Left ventricle myocardium inferior (tissue), 1 donor: ENCODE measurements at regions of chr7 and their contacts with region 1.

Region 1: DNA sequence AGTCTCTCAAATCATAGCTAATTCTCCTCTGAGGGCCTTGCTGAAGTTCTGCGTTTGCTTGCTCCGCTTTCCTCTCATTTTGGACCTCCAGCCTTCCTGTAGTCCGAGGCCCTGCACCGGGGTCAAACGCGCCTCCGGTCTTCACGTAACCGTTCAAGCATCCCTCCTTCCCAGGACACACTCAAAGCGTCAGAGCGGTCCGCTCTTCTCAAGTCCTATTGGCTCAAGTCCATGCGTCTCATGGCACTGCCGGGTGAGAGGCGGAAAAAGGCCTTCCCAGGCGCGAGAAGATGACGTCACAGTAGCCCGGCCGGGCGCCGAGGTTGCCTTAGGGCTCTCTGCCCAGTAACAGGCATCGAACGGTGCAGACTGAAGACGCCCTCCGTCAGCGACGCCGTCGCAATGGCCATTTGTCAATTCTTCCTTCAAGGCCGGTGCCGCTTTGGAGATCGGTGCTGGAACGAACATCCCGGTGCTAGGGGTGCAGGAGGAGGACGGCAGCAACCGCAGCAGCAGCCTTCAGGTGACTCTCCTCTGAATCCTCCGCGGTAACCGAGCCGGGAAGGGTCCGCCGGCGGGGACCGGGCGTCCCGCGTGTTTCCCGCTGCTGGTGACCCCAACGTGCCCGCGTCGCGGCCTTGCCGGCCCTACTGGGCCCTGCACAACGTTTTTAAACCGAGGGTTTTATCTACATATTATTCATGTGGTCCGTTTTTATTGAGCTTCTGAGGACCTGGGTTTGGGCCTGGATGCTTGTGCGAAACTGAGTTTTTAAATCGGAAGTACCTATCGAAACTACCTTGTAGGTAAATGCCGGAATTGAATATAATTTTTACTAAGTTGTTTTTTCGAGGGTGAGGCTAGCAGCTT is at the start of gene NUP42:
- DNase-seq: peak; percentile 93
- H3K4me3 ChIP-seq: peak within 1 kb of the TSS; percentile 94
- H3K27ac ChIP-seq: peak within 1 kb of the TSS; percentile 96
- H3K4me1 ChIP-seq: peaks cover 58% of the 10 kb centered on the region
- H3K27me3 ChIP-seq: no peaks in the 10 kb centered on the region
- CTCF ChIP-seq: no peak
- total RNA-seq, gene NUP42: 20.3 TPM

Region 2: DNA sequence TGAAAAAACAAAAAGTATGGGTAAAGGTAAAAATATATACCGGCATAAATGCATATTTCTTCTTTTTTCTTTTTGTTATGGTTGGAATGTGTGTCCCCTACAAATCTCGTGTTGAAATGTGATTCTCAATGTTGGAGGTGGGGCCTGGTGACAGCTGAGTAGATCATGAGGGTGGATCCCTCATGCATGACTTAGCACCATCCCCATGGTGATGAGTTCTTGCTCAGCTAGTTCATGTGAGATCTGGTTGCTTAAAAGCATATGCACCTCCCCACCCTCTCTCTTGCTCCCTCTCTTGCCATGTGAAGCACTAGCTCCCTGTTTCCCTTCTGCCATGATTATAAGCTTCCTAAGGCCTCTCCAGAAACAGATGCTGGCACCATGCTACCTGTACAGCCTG is 261.2 kb before region 1 on chr7:
- intact Hi-C with region 1: no loop called
- DNase-seq: no peak
- H3K4me3 ChIP-seq: no peak overlapping the region
- H3K27ac ChIP-seq: no peak overlapping the region
- H3K4me1 ChIP-seq: no peaks in the 10 kb centered on the region
- H3K27me3 ChIP-seq: no peaks in the 10 kb centered on the region
- CTCF ChIP-seq: no peak

Region 3: DNA sequence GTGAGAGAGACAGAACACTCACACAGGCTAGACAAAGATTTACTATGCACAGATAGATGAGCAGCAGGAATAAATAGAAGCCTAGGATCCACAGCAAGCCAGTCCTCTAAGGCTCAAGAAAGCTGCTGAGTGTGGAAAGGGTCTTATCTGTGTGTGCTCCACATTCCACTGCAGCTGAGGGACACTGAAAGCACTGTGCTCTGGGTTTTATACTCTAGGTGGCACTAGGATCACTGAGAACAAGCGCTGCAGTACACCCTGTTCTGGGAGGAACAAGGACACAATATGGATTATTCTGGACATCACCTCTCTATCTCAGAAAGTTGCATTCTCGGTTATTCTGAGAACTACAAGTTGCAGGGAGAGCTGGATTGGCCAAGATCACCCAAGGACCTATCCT is 81.2 kb before region 1 on chr7:
- intact Hi-C with region 1: loop called (anchors 5 kb)
- DNase-seq: no peak
- H3K4me3 ChIP-seq: no peak overlapping the region
- H3K27ac ChIP-seq: peak overlapping the region; percentile 57
- H3K4me1 ChIP-seq: peaks cover 21% of the 10 kb centered on the region
- H3K27me3 ChIP-seq: no peaks in the 10 kb centered on the region
- CTCF ChIP-seq: peak; percentile 54

Region 4: GRCh38 chr7:23261843-23262452 is 80.0 kb after region 1 on chr7:
- intact Hi-C with region 1: loop called (anchors 10 kb)
- DNase-seq: peak; percentile 30
- H3K4me3 ChIP-seq: no peak overlapping the region
- H3K27ac ChIP-seq: no peak overlapping the region
- H3K4me1 ChIP-seq: no peaks in the 10 kb centered on the region
- H3K27me3 ChIP-seq: no peaks in the 10 kb centered on the region
- CTCF ChIP-seq: peak; percentile 82